ENCODE measurements at regions of chr1 and their contacts with region 1.

Region 1: GRCh38 chr1:152654110-152654509 is 9.1 kb upstream of the LCE2D start:
- DNase-seq: peak; percentile 54
- H3K4me3 ChIP-seq: no peak overlapping the region
- H3K27ac ChIP-seq: no peak overlapping the region
- H3K4me1 ChIP-seq: no peaks in the 10 kb centered on the region
- H3K27me3 ChIP-seq: no peaks in the 10 kb centered on the region
- CTCF ChIP-seq: peak; percentile 77 to 88

Region 2: DNA sequence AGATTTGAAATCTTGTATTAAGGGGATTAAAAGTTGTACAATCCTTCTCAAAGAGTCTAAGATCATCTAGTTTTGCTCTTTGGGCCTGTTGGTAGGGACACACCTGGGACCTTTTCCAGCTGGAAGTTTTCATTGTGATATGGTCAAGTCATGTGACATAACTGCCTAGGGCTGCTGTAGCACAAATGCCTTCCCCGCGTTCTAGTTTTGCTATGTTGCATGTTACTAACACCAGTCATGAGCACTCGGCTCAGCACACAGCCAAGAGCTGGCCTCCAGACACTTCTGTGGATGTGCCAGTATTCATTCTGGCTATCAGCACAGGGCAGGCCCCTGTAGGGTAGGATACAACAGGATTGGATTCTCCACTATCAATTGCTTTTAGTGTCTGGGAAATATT is 279.7 kb before region 1 on chr1:
- CTCF ChIA-PET with region 1: interaction called, 10 read pairs
- dilution Hi-C with region 1: no loop called
- in situ Hi-C with region 1: no loop called
- intact Hi-C with region 1: no loop called
- DNase-seq: no peak
- H3K4me3 ChIP-seq: no peak overlapping the region
- H3K27ac ChIP-seq: no peak overlapping the region
- H3K4me1 ChIP-seq: no peaks in the 10 kb centered on the region
- H3K27me3 ChIP-seq: peaks cover 6% of the 10 kb centered on the region
- CTCF ChIP-seq: no peak

Region 3: DNA sequence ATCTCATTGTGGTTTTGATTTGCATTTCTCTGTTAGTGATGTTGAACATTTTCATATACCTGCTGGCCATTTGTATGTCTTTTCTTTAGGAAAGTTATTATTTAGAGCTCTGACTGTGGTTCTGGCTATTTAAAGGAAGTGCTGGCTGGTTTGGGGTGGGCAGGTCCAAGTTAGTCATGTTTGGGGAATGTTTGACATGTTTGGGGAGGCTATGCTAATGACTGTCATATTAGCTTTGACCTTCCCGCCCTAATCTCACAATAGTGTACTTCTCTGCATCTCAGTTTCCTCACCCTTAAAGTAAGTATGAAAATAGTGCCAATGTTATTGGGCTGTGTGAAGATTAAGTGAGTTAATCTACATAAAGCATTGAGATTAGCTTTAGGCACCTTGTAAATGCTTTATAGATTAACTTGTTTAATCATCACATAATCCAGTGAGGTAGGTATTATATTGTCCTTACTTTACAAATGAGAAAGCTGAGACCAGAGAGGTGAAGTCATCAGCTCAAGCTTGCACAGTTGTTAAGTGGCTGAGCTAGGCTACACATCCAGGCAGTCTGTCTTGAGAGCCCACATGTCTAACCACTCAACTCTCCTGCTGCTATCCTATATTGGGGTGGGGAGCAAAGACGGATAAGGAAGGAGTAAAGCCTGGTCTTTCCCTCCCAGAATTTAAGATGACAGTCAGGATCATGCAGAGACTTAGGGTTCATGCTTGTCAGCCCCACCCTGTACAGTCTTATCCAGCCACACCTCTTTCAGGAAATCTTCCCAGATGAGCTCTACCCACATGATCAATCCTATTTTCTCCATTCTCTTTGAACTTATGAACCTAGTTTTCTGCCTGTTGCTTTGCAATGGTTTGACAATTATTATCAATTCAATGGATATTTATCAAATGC is 217.3 kb before region 1 on chr1:
- CTCF ChIA-PET with region 1: no interaction called
- dilution Hi-C with region 1: no loop called
- in situ Hi-C with region 1: no loop called
- intact Hi-C with region 1: no loop called
- DNase-seq: peak; percentile 62
- H3K4me3 ChIP-seq: no peak overlapping the region
- H3K27ac ChIP-seq: peak overlapping the region; percentile 1
- H3K4me1 ChIP-seq: peaks cover 19% of the 10 kb centered on the region
- H3K27me3 ChIP-seq: no peaks in the 10 kb centered on the region
- CTCF ChIP-seq: no peak

Region 4: GRCh38 chr1:152596986-152597385 is 57.1 kb before region 1 on chr1:
- CTCF ChIA-PET with region 1: no interaction called
- dilution Hi-C with region 1: no loop called
- in situ Hi-C with region 1: no loop called
- intact Hi-C with region 1: no loop called
- DNase-seq: no peak
- H3K4me3 ChIP-seq: no peak overlapping the region
- H3K27ac ChIP-seq: no peak overlapping the region
- H3K4me1 ChIP-seq: no peaks in the 10 kb centered on the region
- H3K27me3 ChIP-seq: peaks cover 4% of the 10 kb centered on the region
- CTCF ChIP-seq: no peak

Region 5: GRCh38 chr1:152735648-152736047 is 81.5 kb after region 1 on chr1:
- CTCF ChIA-PET with region 1: no interaction called
- dilution Hi-C with region 1: no loop called
- in situ Hi-C with region 1: no loop called
- intact Hi-C with region 1: loop called (anchors 1 kb)
- DNase-seq: no peak
- H3K4me3 ChIP-seq: no peak overlapping the region
- H3K27ac ChIP-seq: no peak overlapping the region
- H3K4me1 ChIP-seq: peaks cover 22% of the 10 kb centered on the region
- H3K27me3 ChIP-seq: no peaks in the 10 kb centered on the region
- CTCF ChIP-seq: peak; percentile 68 to 82

Region 6: DNA sequence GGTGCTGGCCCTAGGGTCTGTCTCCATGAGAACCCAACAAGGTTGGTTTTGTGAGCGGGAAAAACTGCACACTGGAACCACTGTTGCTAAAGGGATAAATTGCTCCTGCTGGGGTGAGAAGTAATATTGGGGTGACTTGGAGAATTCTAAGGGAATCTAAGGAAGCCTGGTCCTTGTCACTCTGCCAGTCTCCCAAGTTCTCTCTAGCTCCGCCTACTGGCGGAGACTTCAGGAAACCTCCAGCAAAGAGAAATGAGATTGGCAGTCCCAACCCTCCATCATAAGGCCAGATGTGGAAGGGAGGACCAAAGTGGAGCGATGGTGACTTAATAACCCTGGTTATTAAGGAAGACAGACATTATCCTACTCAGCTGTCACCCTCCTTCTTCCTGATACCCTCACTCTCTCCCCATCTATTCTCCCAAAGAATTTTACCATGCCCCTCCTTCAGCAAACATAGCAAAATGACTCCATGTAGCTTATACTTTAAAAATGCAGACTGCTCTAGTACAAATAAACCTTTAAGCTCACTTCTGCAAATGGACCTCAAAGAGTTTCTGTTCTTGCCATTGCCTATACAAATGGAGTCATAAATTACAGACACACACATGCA is 123.5 kb after region 1 on chr1:
- CTCF ChIA-PET with region 1: no interaction called
- dilution Hi-C with region 1: no loop called
- in situ Hi-C with region 1: no loop called
- intact Hi-C with region 1: loop called (anchors 2 kb)
- DNase-seq: no peak
- H3K4me3 ChIP-seq: no peak overlapping the region
- H3K27ac ChIP-seq: no peak overlapping the region
- H3K4me1 ChIP-seq: peaks cover 7% of the 10 kb centered on the region
- H3K27me3 ChIP-seq: no peaks in the 10 kb centered on the region
- CTCF ChIP-seq: peak; percentile 29 to 60

Region 7: GRCh38 chr1:153032677-153033308 is 378.7 kb after region 1 on chr1:
- CTCF ChIA-PET with region 1: no interaction called
- dilution Hi-C with region 1: no loop called
- in situ Hi-C with region 1: no loop called
- intact Hi-C with region 1: loop called (anchors 2 kb)
- DNase-seq: peak; percentile 97
- H3K4me3 ChIP-seq: peak overlapping the region in 1 of 3 experiments; percentile 47
- H3K27ac ChIP-seq: peak overlapping the region; percentile 65
- H3K4me1 ChIP-seq: peaks cover 39% of the 10 kb centered on the region
- H3K27me3 ChIP-seq: no peaks in the 10 kb centered on the region
- CTCF ChIP-seq: peak; percentile 63 to 73

Region 8: GRCh38 chr1:153288634-153289275 is 634.6 kb after region 1 on chr1:
- CTCF ChIA-PET with region 1: no interaction called
- dilution Hi-C with region 1: no loop called
- in situ Hi-C with region 1: no loop called
- intact Hi-C with region 1: loop called (anchors 5 kb)
- DNase-seq: peak; percentile 83
- H3K4me3 ChIP-seq: no peak overlapping the region
- H3K27ac ChIP-seq: no peak overlapping the region
- H3K4me1 ChIP-seq: peaks cover 34% of the 10 kb centered on the region
- H3K27me3 ChIP-seq: no peaks in the 10 kb centered on the region
- CTCF ChIP-seq: peak; percentile 75 to 89

Measured in mammary epithelial cell (primary cell).